ENCODE measurements at regions of chr11 and their contacts with region 1.

Region 1: DNA sequence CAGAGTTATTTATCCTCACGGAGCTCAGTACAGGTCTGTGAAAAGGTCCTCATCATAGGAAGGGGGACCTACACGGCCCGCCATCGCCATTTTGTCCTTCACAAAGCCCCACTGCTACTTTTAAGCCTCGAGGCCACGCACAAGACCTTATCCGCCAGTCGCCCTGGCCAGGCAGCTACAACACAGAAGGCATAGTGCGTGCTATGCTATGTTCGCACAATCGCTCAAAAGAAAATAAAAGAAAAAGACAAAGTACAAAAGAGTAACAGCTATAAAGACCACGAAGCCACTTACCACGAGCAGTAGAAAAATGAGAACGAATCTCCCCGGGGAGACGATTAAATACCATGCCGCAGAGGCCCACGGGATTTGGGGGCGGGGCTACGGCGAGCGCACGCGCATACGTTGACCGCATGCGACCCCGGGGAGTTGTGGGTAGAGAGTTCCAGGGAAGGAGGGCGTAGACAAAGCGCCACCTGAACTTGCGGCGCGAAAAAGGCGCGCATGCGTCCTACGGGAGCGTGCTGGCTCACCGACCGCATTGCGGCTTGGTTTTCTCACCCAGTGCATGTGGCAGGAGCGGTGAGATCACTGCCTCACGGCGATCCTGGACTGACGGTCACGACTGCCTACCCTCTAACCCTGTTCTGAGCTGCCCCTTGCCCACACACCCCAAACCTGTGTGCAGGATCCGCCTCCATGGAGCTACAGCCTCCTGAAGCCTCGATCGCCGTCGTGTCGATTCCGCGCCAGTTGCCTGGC is 16.4 kb upstream of the WDR74 start:
- DNase-seq: peak; percentile 97
- ATAC-seq: peak; percentile 86
- H3K4me3 ChIP-seq: peak overlapping the region; percentile 98
- H3K27ac ChIP-seq: peak overlapping the region; percentile 97
- H3K4me1 ChIP-seq: peaks cover 20% of the 10 kb centered on the region
- H3K27me3 ChIP-seq: no peaks in the 10 kb centered on the region
- CTCF ChIP-seq: no peak
- EP300 ChIP-seq: peak in 1 of 2 experiments; percentile 42; a peak in 2 of 4 replicates
- POLR2A ChIP-seq: peak; percentile 99
- RAD21 ChIP-seq: no peak

Region 2: GRCh38 chr11:62169091-62169847 is 686.5 kb before region 1 on chr11:
- CTCF ChIA-PET with region 1: no interaction called
- POLR2A ChIA-PET with region 1: no interaction called
- RAD21 ChIA-PET with region 1: no interaction called
- SMC1A ChIA-PET with region 1: no interaction called
- in situ Hi-C with region 1: no loop called
- intact Hi-C with region 1: no loop called
- DNase-seq: no peak
- ATAC-seq: no peak
- H3K4me3 ChIP-seq: no peak overlapping the region
- H3K27ac ChIP-seq: no peak overlapping the region
- H3K4me1 ChIP-seq: no peaks in the 10 kb centered on the region
- H3K27me3 ChIP-seq: peaks cover 0 to 2% of the 10 kb centered on the region in 2 experiments; a peak in 1 of 4 replicates
- CTCF ChIP-seq: no peak
- EP300 ChIP-seq: no peak
- POLR2A ChIP-seq: no peak
- RAD21 ChIP-seq: no peak

Region 3: DNA sequence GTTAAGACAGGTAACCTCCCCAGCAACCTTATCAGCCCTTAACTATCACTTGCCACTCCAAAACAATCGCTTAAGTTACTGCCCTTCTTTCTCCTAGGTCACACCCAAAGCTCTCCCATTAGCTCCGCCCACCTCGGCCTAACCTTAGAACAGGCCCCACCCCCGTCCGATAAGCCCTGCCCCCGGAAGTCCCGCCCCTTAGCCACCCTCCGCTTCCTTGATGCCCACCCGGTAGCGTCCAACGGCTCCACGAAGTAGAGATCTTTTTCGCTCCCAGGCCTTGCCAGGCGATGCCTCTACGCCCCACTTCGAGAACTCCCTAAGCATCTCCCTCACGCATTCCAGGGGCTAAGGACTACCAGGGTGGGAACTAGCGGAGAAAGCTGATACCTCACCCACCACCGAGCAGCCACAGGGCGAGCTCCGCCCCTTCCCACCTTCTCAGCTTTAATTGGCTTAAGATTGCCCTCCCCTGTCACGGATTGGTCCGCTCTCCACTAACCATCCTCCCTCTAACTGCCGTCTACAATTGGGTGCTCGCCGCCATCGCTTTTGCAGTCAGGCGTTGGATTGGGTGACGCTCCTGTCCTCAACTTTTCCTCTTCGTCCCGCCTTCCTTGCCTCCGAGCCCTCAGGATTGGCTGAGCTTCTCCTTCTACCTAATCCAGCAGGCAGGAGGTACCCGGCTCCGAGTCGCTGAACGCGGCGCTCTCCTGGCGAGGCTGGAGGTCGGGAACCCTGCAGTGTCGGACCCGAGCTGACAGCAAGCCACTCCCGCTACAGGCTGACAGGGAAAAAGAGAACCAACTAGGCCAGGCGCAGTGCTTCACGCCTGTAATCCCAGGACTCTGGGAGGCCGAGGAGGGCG is 101.8 kb before region 1 on chr11 and contains the start of gene ZBTB3:
- CTCF ChIA-PET with region 1: interaction called, 8 read pairs
- POLR2A ChIA-PET with region 1: interaction called, 14 read pairs
- RAD21 ChIA-PET with region 1: interaction called, 4 read pairs
- SMC1A ChIA-PET with region 1: interaction called, 4 read pairs
- in situ Hi-C with region 1: no loop called
- intact Hi-C with region 1: no loop called
- DNase-seq: peak; percentile 99
- ATAC-seq: peak; percentile 99
- H3K4me3 ChIP-seq: peak within 1 kb of the TSS; percentile 85
- H3K27ac ChIP-seq: peak within 1 kb of the TSS; percentile 92
- H3K4me1 ChIP-seq: peaks cover 6% of the 10 kb centered on the region
- H3K27me3 ChIP-seq: no peaks in the 10 kb centered on the region
- CTCF ChIP-seq: no peak
- EP300 ChIP-seq: no peak
- POLR2A ChIP-seq: peak; percentile 85
- RAD21 ChIP-seq: no peak
- polyA plus RNA-seq, gene ZBTB3: 1.4 to 1.9 TPM

Region 4: GRCh38 chr11:62787005-62787759 is 68.6 kb before region 1 on chr11 and contains the start of gene TMEM179B:
- CTCF ChIA-PET with region 1: interaction called, 131 read pairs
- POLR2A ChIA-PET with region 1: interaction called, 53 read pairs
- RAD21 ChIA-PET with region 1: interaction called, 57 read pairs
- SMC1A ChIA-PET with region 1: interaction called, 33 read pairs
- in situ Hi-C with region 1: no loop called
- intact Hi-C with region 1: no loop called
- DNase-seq: peak; percentile 88
- ATAC-seq: peak; percentile 80
- H3K4me3 ChIP-seq: peak within 1 kb of the TSS; percentile 95
- H3K27ac ChIP-seq: peak within 1 kb of the TSS; percentile 64
- H3K4me1 ChIP-seq: peaks cover 7% of the 10 kb centered on the region
- H3K27me3 ChIP-seq: no peaks in the 10 kb centered on the region
- CTCF ChIP-seq: peak; percentile 65 to 75 (median 74)
- EP300 ChIP-seq: no peak
- POLR2A ChIP-seq: peak; percentile 99
- RAD21 ChIP-seq: peak; percentile 58
- polyA plus RNA-seq, gene TMEM179B: 57.8 to 62.8 TPM

Region 5: DNA sequence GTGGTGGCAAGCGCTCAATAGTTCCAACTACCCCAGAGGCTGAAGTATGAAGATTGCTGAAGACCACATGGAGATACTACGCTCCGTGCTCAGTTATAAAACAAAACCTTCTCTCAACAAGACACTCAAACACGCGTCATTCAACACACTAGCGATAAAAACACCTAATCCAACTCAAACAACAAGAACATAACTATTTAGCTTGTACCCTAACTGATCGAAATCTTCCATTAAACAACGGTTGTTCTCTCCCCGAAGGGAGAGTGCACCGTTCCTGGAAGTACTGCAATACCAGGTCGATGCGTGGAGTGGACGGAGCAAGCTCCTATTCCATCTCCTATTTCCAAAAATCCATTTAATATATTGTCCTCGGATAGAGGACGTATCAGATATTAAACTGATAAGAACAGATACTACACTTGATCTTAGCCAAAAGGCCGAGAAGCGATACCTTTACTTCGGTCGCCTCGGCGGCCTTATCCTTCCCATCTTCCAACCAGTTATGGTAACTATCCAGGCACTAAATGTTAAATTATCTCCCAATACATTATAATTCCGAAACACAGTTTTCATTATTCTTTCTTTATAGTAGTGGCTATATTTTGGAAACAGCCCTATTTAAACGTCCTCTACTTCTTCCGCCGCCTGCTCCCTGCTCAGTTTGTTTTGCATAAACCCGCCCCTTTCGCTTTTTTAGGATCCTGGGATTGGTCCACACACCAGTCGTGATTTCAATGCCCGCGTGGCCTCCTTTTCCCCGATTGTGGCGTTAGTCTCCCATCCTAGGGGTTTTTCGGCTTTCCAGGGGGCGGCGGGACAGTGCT is 14.2 kb before region 1 on chr11:
- CTCF ChIA-PET with region 1: interaction called, 13 read pairs
- POLR2A ChIA-PET with region 1: interaction called, 92 read pairs
- RAD21 ChIA-PET with region 1: interaction called, 31 read pairs
- SMC1A ChIA-PET with region 1: interaction called, 36 read pairs
- in situ Hi-C with region 1: no loop called
- intact Hi-C with region 1: loop called (anchors 1 kb)
- DNase-seq: peak; percentile 100
- ATAC-seq: peak; percentile 83
- H3K4me3 ChIP-seq: peak overlapping the region; percentile 68; the same call in 1 of the 2 replicates
- H3K27ac ChIP-seq: peak overlapping the region; percentile 99
- H3K4me1 ChIP-seq: peaks cover 7% of the 10 kb centered on the region
- H3K27me3 ChIP-seq: no peaks in the 10 kb centered on the region
- CTCF ChIP-seq: peak in 1 of 3 experiments; percentile 21; a peak in 1 of 6 replicates
- EP300 ChIP-seq: peak in 1 of 2 experiments; percentile 72; a peak in 1 of 4 replicates
- POLR2A ChIP-seq: peak; percentile 92
- RAD21 ChIP-seq: no peak

Region 6: GRCh38 chr11:62880803-62881578 is 25.2 kb after region 1 on chr11 and contains the start of gene SLC3A2:
- CTCF ChIA-PET with region 1: interaction called, 38 read pairs
- POLR2A ChIA-PET with region 1: interaction called, 41 read pairs
- RAD21 ChIA-PET with region 1: interaction called, 9 read pairs
- SMC1A ChIA-PET with region 1: interaction called, 8 read pairs
- in situ Hi-C with region 1: no loop called
- intact Hi-C with region 1: no loop called
- DNase-seq: peak; percentile 47
- ATAC-seq: peak; percentile 92
- H3K4me3 ChIP-seq: peak within 1 kb of the TSS; percentile 91
- H3K27ac ChIP-seq: peak within 1 kb of the TSS; percentile 95
- H3K4me1 ChIP-seq: peaks cover 15% of the 10 kb centered on the region
- H3K27me3 ChIP-seq: no peaks in the 10 kb centered on the region
- CTCF ChIP-seq: peak; percentile 64 to 86 (median 83)
- EP300 ChIP-seq: peak in 1 of 2 experiments; percentile 17; a peak in 1 of 4 replicates
- POLR2A ChIP-seq: peak; percentile 94
- RAD21 ChIP-seq: peak; percentile 58
- polyA plus RNA-seq, gene SLC3A2: 6.9 to 17.0 TPM

Measured in GM12878 (cell line).